ENCODE measurements at regions of chr16 and their contacts with region 1.

Region 1: GRCh38 chr16:17258848-17259713 is 211.7 kb downstream of the XYLT1 start:
- DNase-seq: peak; percentile 79
- ATAC-seq: peak; percentile 88
- H3K4me3 ChIP-seq: peak overlapping the region; percentile 47
- H3K27ac ChIP-seq: peak overlapping the region; percentile 93
- H3K4me1 ChIP-seq: peaks cover 33% of the 10 kb centered on the region
- H3K27me3 ChIP-seq: no peaks in the 10 kb centered on the region
- CTCF ChIP-seq: peak; percentile 64 to 75 (median 68)
- EP300 ChIP-seq: peak; percentile 22 to 83; a peak in 2 of 4 replicates
- POLR2A ChIP-seq: peak; percentile 62
- RAD21 ChIP-seq: peak; percentile 68

Region 2: GRCh38 chr16:17238284-17239028 is 20.6 kb before region 1 on chr16:
- CTCF ChIA-PET with region 1: interaction called, 6 read pairs
- POLR2A ChIA-PET with region 1: no interaction called
- RAD21 ChIA-PET with region 1: interaction called, 13 read pairs
- SMC1A ChIA-PET with region 1: interaction called, 6 read pairs
- in situ Hi-C with region 1: no loop called
- intact Hi-C with region 1: no loop called
- DNase-seq: no peak
- ATAC-seq: peak; percentile 89
- H3K4me3 ChIP-seq: no peak overlapping the region
- H3K27ac ChIP-seq: no peak overlapping the region
- H3K4me1 ChIP-seq: peaks cover 14% of the 10 kb centered on the region
- H3K27me3 ChIP-seq: no peaks in the 10 kb centered on the region
- CTCF ChIP-seq: no peak
- EP300 ChIP-seq: no peak
- POLR2A ChIP-seq: no peak
- RAD21 ChIP-seq: no peak

Region 3: GRCh38 chr16:17269439-17269838 is 10.4 kb after region 1 on chr16:
- CTCF ChIA-PET with region 1: interaction called, 41 read pairs
- POLR2A ChIA-PET with region 1: no interaction called
- RAD21 ChIA-PET with region 1: interaction called, 8 read pairs
- SMC1A ChIA-PET with region 1: interaction called, 63 read pairs
- in situ Hi-C with region 1: no loop called
- intact Hi-C with region 1: no loop called
- DNase-seq: no peak
- ATAC-seq: no peak
- H3K4me3 ChIP-seq: no peak overlapping the region
- H3K27ac ChIP-seq: no peak overlapping the region
- H3K4me1 ChIP-seq: peaks cover 5% of the 10 kb centered on the region
- H3K27me3 ChIP-seq: no peaks in the 10 kb centered on the region
- CTCF ChIP-seq: no peak
- EP300 ChIP-seq: no peak
- POLR2A ChIP-seq: no peak
- RAD21 ChIP-seq: no peak

Region 4: DNA sequence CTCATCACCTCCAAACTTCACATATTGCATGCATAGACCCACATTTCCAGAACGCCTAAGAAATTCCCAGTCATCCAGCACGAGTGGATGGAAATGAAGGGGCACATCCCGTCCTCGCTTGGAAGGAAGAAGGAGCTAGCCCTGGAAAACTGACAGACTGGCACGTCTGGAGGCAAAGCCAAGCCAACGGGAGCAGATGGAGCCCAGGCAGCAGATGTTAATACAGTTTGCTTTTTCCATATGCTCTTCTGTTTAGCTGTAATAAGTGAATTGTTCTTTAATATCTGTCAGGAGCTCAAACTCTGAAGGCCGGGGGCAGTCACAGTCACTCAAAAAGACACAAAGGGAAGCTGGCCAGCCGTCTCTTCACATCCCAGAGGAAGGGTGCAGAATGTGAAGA is 23.9 kb after region 1 on chr16:
- CTCF ChIA-PET with region 1: interaction called, 41 read pairs
- POLR2A ChIA-PET with region 1: interaction called, 4 read pairs
- RAD21 ChIA-PET with region 1: interaction called, 15 read pairs
- SMC1A ChIA-PET with region 1: interaction called, 63 read pairs
- in situ Hi-C with region 1: no loop called
- intact Hi-C with region 1: no loop called
- DNase-seq: no peak
- ATAC-seq: no peak
- H3K4me3 ChIP-seq: no peak overlapping the region
- H3K27ac ChIP-seq: no peak overlapping the region
- H3K4me1 ChIP-seq: peaks cover 23% of the 10 kb centered on the region
- H3K27me3 ChIP-seq: no peaks in the 10 kb centered on the region
- CTCF ChIP-seq: no peak
- EP300 ChIP-seq: no peak
- POLR2A ChIP-seq: no peak
- RAD21 ChIP-seq: no peak

Region 5: DNA sequence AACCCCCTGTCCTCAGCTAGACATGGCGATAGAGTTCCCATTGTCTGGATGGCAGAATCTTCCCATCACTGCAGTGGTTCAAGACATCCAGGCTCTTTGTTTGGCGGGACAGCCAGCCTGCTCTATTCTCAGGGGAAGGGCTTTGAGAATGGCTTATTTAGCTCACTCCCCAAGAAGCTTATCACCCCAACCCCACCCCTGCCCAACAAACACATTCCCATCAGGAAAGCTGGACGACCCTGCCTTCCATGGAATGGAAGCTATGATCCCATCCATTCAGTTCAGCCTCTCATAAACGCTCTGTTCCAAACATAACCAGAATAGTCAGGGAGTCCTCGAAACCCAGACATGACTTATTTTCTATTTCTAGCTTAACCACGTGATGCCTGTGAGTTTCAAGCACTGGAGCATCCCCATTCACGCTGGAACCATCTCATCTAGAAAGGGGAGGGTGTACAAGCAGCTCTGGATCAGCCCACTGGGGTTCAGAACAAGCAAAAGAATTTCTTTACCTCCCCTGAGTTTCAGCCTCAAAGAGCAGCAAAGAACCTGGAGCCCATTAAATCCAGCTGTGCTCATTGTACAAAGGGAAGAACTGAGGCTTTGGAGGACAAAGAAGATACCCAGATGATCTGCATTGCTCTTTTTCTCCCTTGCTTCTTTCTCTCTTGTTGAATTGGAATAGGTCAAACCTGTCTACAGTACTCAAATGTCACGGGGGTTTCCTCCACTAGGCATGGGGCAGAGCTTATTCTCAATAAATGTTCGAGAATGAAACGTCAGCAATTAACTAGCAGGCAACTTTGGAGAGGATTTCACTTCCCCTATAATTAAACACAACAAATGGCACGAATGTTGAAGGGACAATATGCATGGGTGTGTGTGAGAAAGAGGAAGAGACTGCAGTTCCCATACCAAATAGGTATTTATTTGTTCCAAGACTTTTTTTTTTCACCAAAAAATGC is 118.6 kb after region 1 on chr16:
- CTCF ChIA-PET with region 1: interaction called, 5 read pairs
- POLR2A ChIA-PET with region 1: no interaction called
- RAD21 ChIA-PET with region 1: interaction called, 14 read pairs
- SMC1A ChIA-PET with region 1: interaction called, 26 read pairs
- in situ Hi-C with region 1: no loop called
- intact Hi-C with region 1: no loop called
- DNase-seq: peak; percentile 80
- ATAC-seq: peak; percentile 90
- H3K4me3 ChIP-seq: 0 out of 2 replicates have a peak overlapping the region, but pooled peaks have one; percentile 43
- H3K27ac ChIP-seq: peak overlapping the region; percentile 72
- H3K4me1 ChIP-seq: peaks cover 35% of the 10 kb centered on the region
- H3K27me3 ChIP-seq: no peaks in the 10 kb centered on the region
- CTCF ChIP-seq: no peak
- EP300 ChIP-seq: peak; percentile 84 to 91; a peak in 2 of 4 replicates
- POLR2A ChIP-seq: no peak
- RAD21 ChIP-seq: peak; percentile 21; the same call in 1 of the 2 replicates

Measured in GM12878 (cell line).